ENCODE measurements at regions of chr5 and their contacts with region 1.

Region 1: DNA sequence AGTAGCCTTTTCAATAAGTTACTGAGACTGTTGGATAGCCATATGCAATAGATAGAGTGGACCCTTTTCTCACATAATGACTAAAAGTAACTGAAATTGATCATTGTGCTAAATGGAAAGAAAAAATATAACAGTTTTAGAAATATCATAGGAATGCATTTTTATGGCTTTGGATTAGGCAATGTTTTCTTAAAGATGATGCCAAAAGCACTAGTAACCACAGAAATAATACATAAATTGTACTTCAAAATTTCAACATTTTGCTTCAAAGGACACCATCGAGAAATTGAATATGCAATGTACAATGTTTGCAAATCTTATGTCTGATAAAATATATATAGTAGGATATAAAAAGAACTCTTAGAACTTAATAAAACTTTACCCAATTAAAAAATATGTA is 1267.5 kb upstream of the CDH9 start:
- DNase-seq: no peak
- H3K4me3 ChIP-seq: no peak overlapping the region
- H3K27ac ChIP-seq: no peak overlapping the region
- H3K4me1 ChIP-seq: no peaks in the 10 kb centered on the region
- H3K27me3 ChIP-seq: no peaks in the 10 kb centered on the region
- CTCF ChIP-seq: no peak
- POLR2A ChIP-seq: no peak

Region 2: GRCh38 chr5:27377626-27378025 is 928.3 kb before region 1 on chr5:
- intact Hi-C with region 1: no loop called
- DNase-seq: no peak
- H3K4me3 ChIP-seq: no peak overlapping the region
- H3K27ac ChIP-seq: no peak overlapping the region
- H3K4me1 ChIP-seq: no peaks in the 10 kb centered on the region
- H3K27me3 ChIP-seq: no peaks in the 10 kb centered on the region
- CTCF ChIP-seq: no peak
- POLR2A ChIP-seq: no peak

Region 3: DNA sequence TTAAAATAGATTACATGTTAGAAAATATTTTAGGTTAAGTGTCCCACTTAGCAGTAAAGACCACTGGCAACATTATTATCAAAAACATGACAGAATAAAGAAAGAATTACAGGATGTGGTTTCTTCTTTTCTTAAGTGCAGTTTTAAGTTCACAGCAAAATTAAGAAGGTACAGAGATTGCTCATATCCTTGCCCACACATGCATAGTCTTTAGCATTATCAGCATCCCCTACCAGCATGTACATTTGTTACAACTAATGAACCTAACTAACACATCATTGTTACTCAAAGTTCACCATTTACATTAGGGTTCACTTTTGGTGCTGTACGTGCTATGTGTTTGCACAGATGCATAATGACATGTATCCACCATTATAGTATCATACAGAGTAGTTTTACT is 429.8 kb before region 1 on chr5:
- intact Hi-C with region 1: loop called (anchors 5 kb)
- DNase-seq: no peak
- H3K4me3 ChIP-seq: no peak overlapping the region
- H3K27ac ChIP-seq: no peak overlapping the region
- H3K4me1 ChIP-seq: no peaks in the 10 kb centered on the region
- H3K27me3 ChIP-seq: no peaks in the 10 kb centered on the region
- CTCF ChIP-seq: no peak
- POLR2A ChIP-seq: no peak

Region 4: GRCh38 chr5:30161090-30161489 is 1855.2 kb after region 1 on chr5:
- intact Hi-C with region 1: no loop called
- DNase-seq: no peak
- H3K4me3 ChIP-seq: no peak overlapping the region
- H3K27ac ChIP-seq: no peak overlapping the region
- H3K4me1 ChIP-seq: no peaks in the 10 kb centered on the region
- H3K27me3 ChIP-seq: no peaks in the 10 kb centered on the region
- CTCF ChIP-seq: no peak
- POLR2A ChIP-seq: no peak

Measured in breast epithelium (tissue), 4 donors.